Gastrocnemius medialis (tissue), 4 donors: ENCODE measurements at regions of chr1 and their contacts with region 1.

Region 1: DNA sequence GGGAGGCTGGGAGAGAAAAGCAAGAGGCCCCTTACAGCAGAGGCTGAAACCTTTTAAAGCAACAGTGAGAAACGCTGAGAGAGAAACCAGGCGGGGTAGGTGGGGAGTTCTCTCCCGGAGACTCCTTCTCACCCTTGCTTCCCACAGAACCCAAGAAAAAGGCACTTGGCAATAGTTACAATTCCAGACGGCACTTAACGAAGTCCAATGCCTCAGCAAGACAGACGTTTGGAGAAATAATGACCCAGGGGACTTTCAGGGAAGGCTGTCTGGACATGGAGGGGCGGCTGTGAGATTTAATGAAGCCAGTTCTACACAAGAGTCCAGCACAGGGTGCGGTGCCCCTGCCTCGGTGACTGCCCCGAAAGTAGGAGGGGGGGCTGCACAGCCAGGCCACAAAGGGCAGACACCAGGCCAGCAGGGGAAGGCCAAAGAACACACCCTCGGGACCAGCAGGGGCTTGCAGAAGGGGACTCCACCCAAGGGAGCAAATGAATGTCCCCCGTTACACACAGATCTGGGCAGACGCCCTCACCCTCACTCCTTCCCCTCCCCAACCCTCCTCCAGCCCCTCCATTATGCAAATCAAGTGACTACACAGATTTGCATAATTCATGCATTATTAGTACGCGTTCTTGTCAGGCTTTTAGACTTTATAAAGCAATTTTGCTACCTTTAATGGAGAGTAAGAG is 26.3 kb downstream of the KCNN3 start:
- DNase-seq: peak in 1 of 2 donors; percentile 10
- ATAC-seq: no peak
- H3K4me3 ChIP-seq: no peak overlapping the region
- H3K27ac ChIP-seq: peak overlapping the region in 1 of 4 donors; percentile 76
- H3K4me1 ChIP-seq: peaks cover 57 to 58% of the 10 kb centered on the region in 2 donors
- H3K27me3 ChIP-seq: no peaks in the 10 kb centered on the region
- CTCF ChIP-seq: no peak
- POLR2A ChIP-seq: no peak

Region 2: DNA sequence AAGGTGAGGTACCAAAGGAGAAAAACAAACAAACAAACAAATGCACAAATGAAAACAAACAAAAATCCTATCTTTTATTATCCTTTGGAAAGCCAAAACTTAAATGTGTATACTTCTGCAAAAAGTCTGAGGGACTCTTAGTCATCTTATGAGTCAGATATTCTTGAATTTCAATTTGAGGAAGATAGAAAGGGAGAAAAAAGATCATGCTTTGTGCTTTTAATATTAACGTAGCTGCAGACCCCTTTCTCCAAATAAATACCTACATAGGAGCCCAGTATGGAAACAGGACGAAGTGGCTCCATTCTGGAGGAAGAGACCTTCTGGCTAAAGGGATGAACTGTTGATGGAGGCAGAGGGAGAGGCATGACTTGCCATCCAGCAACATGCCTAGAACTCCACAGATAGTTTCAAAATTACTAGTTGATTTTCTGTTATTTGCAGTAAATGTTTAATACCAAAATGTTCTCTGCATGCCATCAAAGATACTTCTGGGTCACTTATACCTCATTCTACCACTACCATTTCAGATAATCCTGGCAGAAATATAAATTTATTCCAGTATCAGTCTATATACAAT is 714.3 kb before region 1 on chr1:
- in situ Hi-C with region 1: no loop called
- intact Hi-C with region 1: no loop called
- DNase-seq: no peak
- ATAC-seq: no peak
- H3K4me3 ChIP-seq: no peak overlapping the region
- H3K27ac ChIP-seq: no peak overlapping the region
- H3K4me1 ChIP-seq: no peaks in the 10 kb centered on the region
- H3K27me3 ChIP-seq: no peaks in the 10 kb centered on the region
- CTCF ChIP-seq: no peak
- POLR2A ChIP-seq: no peak

Region 3: GRCh38 chr1:154831462-154831861 is 12.3 kb before region 1 on chr1:
- in situ Hi-C with region 1: no loop called
- intact Hi-C with region 1: loop called (anchors 1 kb)
- DNase-seq: no peak
- ATAC-seq: no peak
- H3K4me3 ChIP-seq: no peak overlapping the region
- H3K27ac ChIP-seq: no peak overlapping the region
- H3K4me1 ChIP-seq: peaks cover 10 to 25% of the 10 kb centered on the region in 2 donors
- H3K27me3 ChIP-seq: no peaks in the 10 kb centered on the region
- CTCF ChIP-seq: no peak
- POLR2A ChIP-seq: no peak

Region 4: GRCh38 chr1:154870115-154870571 is 26.4 kb after region 1 on chr1 and contains the start of gene KCNN3:
- in situ Hi-C with region 1: no loop called
- intact Hi-C with region 1: no loop called
- DNase-seq: peak; percentile 90 to 95
- ATAC-seq: peak; percentile 85 to 87
- H3K4me3 ChIP-seq: peak within 1 kb of the TSS; percentile 52 to 71 (median 66)
- H3K27ac ChIP-seq: peak within 1 kb of the TSS; percentile 91 to 99 (median 96)
- H3K4me1 ChIP-seq: peaks cover 32 to 41% of the 10 kb centered on the region in 2 donors
- H3K27me3 ChIP-seq: no peaks in the 10 kb centered on the region
- CTCF ChIP-seq: peak in 1 of 5 experiments; percentile 7
- POLR2A ChIP-seq: peak; percentile 92 to 96
- total RNA-seq, gene KCNN3: 5.0 to 30.0 (median 20.8) TPM

Region 5: GRCh38 chr1:154943649-154944400 is 100.1 kb after region 1 on chr1:
- in situ Hi-C with region 1: no loop called
- intact Hi-C with region 1: no loop called
- DNase-seq: no peak
- ATAC-seq: peak in 1 of 2 donors; percentile 41
- H3K4me3 ChIP-seq: no peak overlapping the region
- H3K27ac ChIP-seq: peak overlapping the region; percentile 10 to 68 (median 52)
- H3K4me1 ChIP-seq: peaks cover 2 to 9% of the 10 kb centered on the region in 2 donors
- H3K27me3 ChIP-seq: no peaks in the 10 kb centered on the region
- CTCF ChIP-seq: peak; percentile 34 to 79 (median 60)
- POLR2A ChIP-seq: no peak